CD4-positive, alpha-beta T cell (primary cell): ENCODE measurements at regions of chr9 and their contacts with region 1.

Region 1: DNA sequence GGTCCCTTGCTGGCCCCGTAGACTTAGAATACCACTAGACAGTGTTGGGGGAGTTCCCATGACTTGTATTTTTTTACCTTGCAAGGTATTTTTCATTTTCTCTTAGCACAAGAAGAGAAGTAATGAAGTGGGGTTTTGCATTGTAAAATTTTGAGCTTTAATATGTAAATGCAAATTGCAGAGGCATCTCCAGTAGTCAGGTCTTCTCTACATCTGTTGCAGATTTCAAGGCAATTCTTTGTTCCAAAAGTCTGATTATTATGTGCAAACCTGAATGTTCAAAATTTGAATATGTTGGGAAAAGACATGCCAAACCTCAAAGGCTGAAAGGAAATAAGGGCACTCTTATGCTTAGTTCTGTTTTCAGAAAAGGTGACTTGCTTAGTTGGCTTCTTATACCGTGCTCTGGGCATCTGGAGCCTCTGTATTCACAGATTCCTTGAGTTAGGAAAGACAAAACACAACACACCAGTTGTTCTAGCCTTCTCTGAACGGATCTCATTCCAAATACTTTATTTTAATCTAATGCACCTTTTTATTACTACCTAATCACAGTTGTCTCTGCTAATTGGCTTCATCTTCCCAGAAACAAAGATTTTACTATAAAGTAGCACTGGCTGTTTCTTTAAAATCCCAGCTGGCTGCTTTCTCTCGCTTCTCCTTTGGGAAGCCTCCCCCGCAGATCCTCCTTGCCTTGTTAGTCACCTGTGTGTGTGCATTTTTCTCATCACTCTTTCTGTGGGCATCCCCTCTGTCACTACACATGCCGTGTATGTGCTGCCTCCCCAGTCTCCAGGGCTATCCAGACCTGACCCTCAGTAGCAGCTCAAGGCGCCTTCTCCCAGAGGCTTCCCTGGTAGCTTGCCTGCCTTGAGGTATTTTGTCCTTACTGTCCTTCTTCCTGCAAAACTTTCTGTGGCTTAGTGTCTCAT is 138.2 kb downstream of the TLE4 start:
- DNase-seq: no peak
- ATAC-seq: no peak
- H3K4me3 ChIP-seq: no peak overlapping the region
- H3K4me3 Mint-ChIP-seq: no peak overlapping the region
- H3K27ac ChIP-seq: no peak overlapping the region
- H3K27ac Mint-ChIP-seq: no peak overlapping the region
- H3K4me1 ChIP-seq: no peaks in the 10 kb centered on the region
- H3K4me1 Mint-ChIP-seq: no peaks in the 10 kb centered on the region
- H3K27me3 ChIP-seq: no peaks in the 10 kb centered on the region
- H3K27me3 Mint-ChIP-seq: no peaks in the 10 kb centered on the region
- CTCF ChIP-seq: no peak

Region 2: DNA sequence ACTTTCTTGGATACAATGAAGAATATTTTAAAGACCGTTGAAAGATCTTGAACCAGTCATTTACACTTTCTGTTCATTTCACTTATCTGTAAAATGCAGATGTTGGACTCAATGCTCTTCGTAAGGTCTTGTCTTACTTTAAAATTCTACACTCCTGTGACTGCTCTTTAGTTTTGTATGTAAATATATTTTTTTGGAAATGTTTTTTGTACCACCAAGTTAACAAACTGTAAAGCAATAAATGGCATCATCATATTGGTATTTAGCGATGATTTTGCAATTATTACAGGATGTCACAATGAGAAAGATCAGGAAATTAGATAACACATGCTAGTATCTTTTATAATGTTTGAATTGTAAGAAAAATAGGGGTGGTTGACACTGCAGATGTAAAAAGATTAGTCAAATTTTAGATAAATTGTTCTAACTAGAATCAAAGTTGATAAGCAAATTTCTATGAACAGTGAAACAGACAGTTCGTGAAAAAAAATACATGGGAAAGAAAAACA is 1597.5 kb before region 1 on chr9:
- CTCF ChIA-PET with region 1: no interaction called
- POLR2A ChIA-PET with region 1: no interaction called
- intact Hi-C with region 1: loop called in 1 of 2 experiments (anchors 5 kb)
- DNase-seq: no peak
- ATAC-seq: no peak
- H3K4me3 ChIP-seq: no peak overlapping the region
- H3K4me3 Mint-ChIP-seq: no peak overlapping the region
- H3K27ac ChIP-seq: no peak overlapping the region
- H3K27ac Mint-ChIP-seq: no peak overlapping the region
- H3K4me1 ChIP-seq: peaks cover 5% of the 10 kb centered on the region
- H3K4me1 Mint-ChIP-seq: peaks cover 46% of the 10 kb centered on the region
- H3K27me3 ChIP-seq: no peaks in the 10 kb centered on the region
- H3K27me3 Mint-ChIP-seq: no peaks in the 10 kb centered on the region
- CTCF ChIP-seq: no peak

Region 3: GRCh38 chr9:80294955-80295733 is 585.1 kb after region 1 on chr9:
- CTCF ChIA-PET with region 1: no interaction called
- POLR2A ChIA-PET with region 1: no interaction called
- intact Hi-C with region 1: no loop called
- DNase-seq: no peak
- ATAC-seq: no peak
- H3K4me3 ChIP-seq: no peak overlapping the region
- H3K4me3 Mint-ChIP-seq: no peak overlapping the region
- H3K27ac ChIP-seq: no peak overlapping the region
- H3K27ac Mint-ChIP-seq: no peak overlapping the region
- H3K4me1 ChIP-seq: no peaks in the 10 kb centered on the region
- H3K4me1 Mint-ChIP-seq: no peaks in the 10 kb centered on the region
- H3K27me3 ChIP-seq: no peaks in the 10 kb centered on the region
- H3K27me3 Mint-ChIP-seq: no peaks in the 10 kb centered on the region
- CTCF ChIP-seq: no peak